ENCODE measurements at regions of chr4 and their contacts with region 1.

Region 1: DNA sequence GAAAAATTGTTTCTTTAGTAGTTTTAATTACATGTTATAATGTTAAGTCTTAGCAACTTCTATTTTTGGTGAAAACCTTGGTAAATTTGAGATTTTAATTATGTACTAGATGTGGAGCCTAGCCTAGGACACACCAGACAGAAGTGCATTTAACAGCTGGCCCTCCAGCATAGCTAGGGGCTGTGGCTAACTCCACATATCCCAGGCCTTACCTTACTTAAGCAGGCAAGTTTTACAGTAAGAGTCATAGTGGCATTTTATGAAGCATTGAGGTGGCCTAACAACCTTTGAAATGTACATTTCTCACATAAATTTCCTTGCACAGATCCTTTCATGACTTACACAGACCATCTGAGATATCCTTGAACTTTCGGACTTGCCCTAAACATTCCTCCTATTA is 71.6 kb upstream of the C4orf54 start:
- DNase-seq: no peak

Region 2: DNA sequence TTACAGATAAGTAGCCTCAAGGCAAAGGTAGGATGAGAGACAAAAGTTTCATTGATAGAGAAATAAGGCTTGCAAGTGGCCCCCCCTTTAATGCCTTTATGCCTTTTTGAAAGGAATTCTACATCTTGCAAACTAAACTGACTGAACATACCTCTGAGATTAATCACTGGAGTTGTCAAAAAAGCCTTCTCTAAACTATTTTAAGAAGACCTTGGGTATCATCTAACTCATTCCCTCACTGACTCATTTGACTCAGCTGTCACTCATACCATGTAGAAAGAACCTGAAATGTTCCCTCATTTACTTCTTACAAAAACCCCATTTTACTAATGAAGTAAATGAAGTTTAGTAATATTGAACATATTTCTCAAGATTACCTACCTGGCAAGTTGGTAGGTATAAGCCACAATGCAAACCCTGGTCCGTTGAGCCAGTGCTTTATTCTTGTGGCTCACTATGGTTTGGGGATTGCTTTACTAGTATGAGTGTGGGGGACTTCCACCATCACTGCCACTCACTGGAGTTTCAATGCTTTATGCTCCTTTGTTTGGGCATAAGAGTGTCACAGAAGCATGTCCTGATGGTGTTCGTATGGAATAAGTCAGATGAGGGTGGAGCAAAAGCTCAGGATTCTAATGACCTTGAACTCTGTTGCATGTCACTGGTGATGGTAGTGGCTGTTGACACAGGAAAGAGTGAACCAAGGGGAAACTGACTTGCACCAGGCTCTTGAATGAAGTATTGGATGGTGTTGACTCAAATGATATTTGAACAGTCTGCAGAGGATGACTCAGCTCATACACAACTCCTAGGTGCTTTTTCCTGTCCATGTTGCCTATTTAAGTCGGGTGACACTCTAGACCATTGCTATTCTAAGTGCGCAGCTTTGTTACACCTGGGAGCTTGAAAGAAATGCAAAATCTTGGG is 1094.1 kb after region 1 on chr4:
- intact Hi-C with region 1: loop called in 1 of 2 experiments (anchors 5 kb)
- DNase-seq: no peak